Pancreas (tissue), 10 donors: ENCODE measurements at regions of chr6 and their contacts with region 1.

Region 1: DNA sequence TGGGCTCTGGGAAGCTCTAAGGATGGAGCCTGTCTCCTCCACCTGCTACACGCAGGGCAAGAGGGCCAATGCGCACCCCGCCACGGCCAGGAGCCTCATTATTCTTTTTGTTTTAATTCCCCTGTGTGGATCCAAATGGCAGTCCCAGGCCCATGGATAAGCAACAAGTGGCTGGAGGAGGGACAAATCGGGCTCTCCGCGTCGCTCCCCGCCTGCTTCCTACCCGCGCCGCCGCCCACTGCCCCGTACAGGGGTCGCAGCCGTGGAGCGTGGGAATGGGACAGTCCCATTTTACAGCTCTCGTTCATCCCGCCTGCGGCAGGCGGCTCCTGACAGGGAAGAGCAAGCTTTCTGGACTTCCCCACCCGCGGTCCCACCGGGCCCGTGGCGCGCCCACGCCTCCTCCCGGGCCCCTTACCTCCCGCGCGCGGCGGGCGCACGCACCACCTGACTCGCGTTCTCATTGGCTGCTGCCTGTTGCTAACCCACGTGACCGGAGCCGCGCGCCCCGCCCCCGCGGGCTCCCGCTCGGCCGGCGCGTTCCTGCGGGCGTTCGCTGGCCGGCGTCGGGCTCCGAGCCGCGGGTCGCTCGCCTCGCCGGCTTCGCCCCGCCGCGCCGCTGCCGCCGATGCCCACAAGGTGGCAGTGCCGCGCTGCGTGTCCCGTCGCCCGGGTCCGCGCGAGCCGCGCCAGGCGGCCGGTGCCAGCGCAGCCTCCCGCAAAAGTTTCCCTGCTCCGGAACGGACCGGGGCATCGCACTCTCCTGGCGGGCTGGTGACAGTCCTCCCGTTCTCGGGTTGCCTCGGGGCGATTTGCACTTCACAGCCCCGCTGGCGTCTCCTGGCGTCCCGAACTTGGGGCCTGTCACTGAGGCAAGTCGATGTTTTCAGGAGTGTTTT is 93.3 kb downstream of the CD83 start:
- DNase-seq: peak; percentile 90 to 98 (median 95)
- ATAC-seq: peak; percentile 95 to 99 (median 96)
- H3K4me3 ChIP-seq: peak overlapping the region; percentile 45 to 91 (median 60)
- H3K27ac ChIP-seq: peak overlapping the region; percentile 23 to 78 (median 52)
- H3K4me1 ChIP-seq: peaks cover 0 to 4% (median 0%) of the 10 kb centered on the region in 3 donors
- H3K27me3 ChIP-seq: no peaks in the 10 kb centered on the region
- CTCF ChIP-seq: peak; percentile 38 to 55 (median 50)

Region 2: GRCh38 chr6:14431385-14432330 is 220.7 kb after region 1 on chr6:
- intact Hi-C with region 1: no loop called
- DNase-seq: no peak
- ATAC-seq: no peak
- H3K4me3 ChIP-seq: no peak overlapping the region
- H3K27ac ChIP-seq: no peak overlapping the region
- H3K4me1 ChIP-seq: no peaks in the 10 kb centered on the region
- H3K27me3 ChIP-seq: no peaks in the 10 kb centered on the region
- CTCF ChIP-seq: no peak

Region 3: DNA sequence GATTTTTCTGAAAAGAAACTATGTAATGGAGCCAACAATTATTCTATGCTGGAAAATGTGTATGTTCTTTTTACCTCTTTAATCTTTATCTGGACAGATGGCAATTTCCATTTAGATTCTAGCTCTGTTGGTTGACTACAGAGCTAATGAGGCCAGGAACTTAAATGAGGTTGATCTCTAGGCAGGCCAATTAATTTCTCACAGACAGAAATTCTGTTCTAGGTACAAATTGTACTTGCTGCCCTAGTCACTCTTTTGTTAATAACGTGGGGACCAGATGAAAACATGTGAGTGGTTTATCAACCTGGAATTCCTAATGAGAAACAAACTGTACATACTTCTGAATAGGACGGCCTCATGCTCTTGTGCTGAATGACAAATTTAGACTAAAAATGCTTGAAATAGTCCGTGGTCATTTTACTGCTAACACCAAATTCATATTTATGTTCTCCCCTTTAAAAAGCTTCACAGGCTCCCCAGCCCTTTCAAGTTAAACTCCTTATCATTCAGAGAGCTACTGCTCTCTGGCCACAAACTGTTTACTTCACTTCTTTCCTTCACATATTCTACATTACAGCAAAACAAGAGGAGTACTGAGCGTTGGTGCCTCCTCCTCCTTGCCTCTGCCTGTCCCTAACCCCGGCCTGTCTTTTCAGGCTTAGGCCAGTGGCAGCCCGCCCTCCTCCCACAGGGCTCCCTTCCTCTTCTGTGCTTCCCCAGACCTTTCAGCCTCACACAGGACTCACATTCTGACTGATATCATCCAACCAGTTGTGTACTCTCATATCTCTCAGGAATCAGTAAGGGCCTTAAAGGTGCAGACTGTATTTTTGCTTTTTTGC is 1410.5 kb after region 1 on chr6:
- intact Hi-C with region 1: loop called in 1 of 3 experiments (anchors 10 kb)
- DNase-seq: peak in 1 of 6 donors; percentile 49
- ATAC-seq: peak; percentile 52 to 90 (median 80)
- H3K4me3 ChIP-seq: no peak overlapping the region
- H3K27ac ChIP-seq: peak overlapping the region; percentile 7 to 50 (median 36)
- H3K4me1 ChIP-seq: peaks cover 0 to 13% (median 9%) of the 10 kb centered on the region in 3 donors
- H3K27me3 ChIP-seq: no peaks in the 10 kb centered on the region
- CTCF ChIP-seq: no peak